ENCODE measurements at regions of chr9 and their contacts with region 1.

Region 1: GRCh38 chr9:21828853-21829410 is 26.5 kb downstream of the MTAP start:
- DNase-seq: no peak
- ATAC-seq: no peak
- H3K4me3 ChIP-seq: no peak overlapping the region
- H3K27ac ChIP-seq: no peak overlapping the region
- H3K4me1 ChIP-seq: peaks cover 13% of the 10 kb centered on the region
- H3K27me3 ChIP-seq: no peaks in the 10 kb centered on the region
- CTCF ChIP-seq: no peak

Region 2: DNA sequence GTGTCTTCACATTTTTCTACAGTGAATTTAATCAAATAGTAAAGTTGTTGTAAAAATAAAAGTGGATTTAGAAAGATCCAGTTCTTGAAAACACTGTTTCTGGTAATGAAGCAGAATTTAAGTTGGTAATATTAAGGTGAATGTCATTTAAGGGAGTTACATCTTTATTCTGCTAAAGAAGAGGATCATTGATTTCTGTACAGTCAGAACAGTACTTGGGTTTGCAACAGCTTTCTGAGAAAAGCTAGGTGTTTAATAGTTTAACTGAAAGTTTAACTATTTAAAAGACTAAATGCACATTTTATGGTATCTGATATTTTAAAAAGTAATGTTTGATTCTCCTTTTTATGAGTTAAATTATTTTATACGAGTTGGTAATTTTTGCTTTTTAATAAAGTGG is 33.9 kb after region 1 on chr9:
- intact Hi-C with region 1: no loop called
- DNase-seq: no peak
- ATAC-seq: no peak
- H3K4me3 ChIP-seq: no peak overlapping the region
- H3K27ac ChIP-seq: no peak overlapping the region
- H3K4me1 ChIP-seq: no peaks in the 10 kb centered on the region
- H3K27me3 ChIP-seq: no peaks in the 10 kb centered on the region
- CTCF ChIP-seq: no peak

Region 3: DNA sequence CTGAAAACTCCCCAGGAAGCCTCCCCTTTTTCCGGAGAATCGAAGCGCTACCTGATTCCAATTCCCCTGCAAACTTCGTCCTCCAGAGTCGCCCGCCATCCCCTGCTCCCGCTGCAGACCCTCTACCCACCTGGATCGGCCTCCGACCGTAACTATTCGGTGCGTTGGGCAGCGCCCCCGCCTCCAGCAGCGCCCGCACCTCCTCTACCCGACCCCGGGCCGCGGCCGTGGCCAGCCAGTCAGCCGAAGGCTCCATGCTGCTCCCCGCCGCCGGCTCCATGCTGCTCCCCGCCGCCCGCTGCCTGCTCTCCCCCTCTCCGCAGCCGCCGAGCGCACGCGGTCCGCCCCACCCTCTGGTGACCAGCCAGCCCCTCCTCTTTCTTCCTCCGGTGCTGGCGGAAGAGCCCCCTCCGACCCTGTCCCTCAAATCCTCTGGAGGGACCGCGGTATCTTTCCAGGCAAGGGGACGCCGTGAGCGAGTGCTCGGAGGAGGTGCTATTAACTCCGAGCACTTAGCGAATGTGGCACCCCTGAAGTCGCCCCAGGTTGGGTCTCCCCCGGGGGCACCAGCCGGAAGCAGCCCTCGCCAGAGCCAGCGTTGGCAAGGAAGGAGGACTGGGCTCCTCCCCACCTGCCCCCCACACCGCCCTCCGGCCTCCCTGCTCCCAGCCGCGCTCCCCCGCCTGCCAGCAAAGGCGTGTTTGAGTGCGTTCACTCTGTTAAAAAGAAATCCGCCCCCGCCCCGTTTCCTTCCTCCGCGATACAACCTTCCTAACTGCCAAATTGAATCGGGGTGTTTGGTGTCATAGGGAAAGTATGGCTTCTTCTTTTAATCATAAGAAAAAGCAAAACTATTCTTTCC is 145.8 kb after region 1 on chr9:
- intact Hi-C with region 1: loop called in 1 of 2 experiments (anchors 10 kb)
- DNase-seq: peak; percentile 25 to 53
- ATAC-seq: peak; percentile 52 to 85 (median 65)
- H3K4me3 ChIP-seq: peak overlapping the region; percentile 63
- H3K27ac ChIP-seq: no peak overlapping the region
- H3K4me1 ChIP-seq: peaks cover 8% of the 10 kb centered on the region
- H3K27me3 ChIP-seq: peaks cover 13 to 100% (median 41%) of the 10 kb centered on the region in 3 donors
- CTCF ChIP-seq: no peak

Measured in psoas muscle (tissue), 8 donors.